Activated B cell treated with CpG ODN at 0.5 μM for 24 hours (primary cell): ENCODE measurements at regions of chrX and their contacts with region 1.

Region 1: GRCh38 chrX:43002526-43003203 is 224.7 kb upstream of the PPP1R2C start:
- DNase-seq: no peak
- ATAC-seq: peak; percentile 66
- H3K4me3 Mint-ChIP-seq: peak overlapping the region; percentile 24
- H3K27ac Mint-ChIP-seq: peak overlapping the region; percentile 59
- H3K4me1 Mint-ChIP-seq: peaks cover 19% of the 10 kb centered on the region
- H3K27me3 Mint-ChIP-seq: no peaks in the 10 kb centered on the region
- CTCF ChIP-seq: no peak

Region 2: DNA sequence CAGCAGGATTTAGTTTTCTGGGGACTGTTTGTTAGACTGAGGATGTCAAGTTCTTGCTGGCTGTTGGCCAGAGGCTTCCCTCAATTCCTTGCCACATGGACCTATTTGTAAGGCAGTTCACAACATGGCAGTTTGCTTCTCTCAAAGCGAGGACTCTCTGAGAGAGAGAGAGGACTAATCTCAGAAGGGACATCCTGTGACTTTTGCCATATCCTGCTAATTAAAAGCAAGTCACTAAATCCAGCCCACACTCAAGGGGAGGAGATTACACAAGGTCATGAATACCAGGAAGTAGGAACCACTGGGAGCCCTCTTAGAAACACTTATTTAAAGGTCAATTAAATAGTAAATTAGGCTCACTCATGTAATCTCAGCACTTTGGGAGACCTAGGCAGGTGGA is 262.9 kb before region 1 on chrX:
- CTCF ChIA-PET with region 1: no interaction called
- POLR2A ChIA-PET with region 1: no interaction called
- intact Hi-C with region 1: loop called (anchors 5 kb)
- DNase-seq: no peak
- ATAC-seq: no peak
- H3K4me3 Mint-ChIP-seq: peak overlapping the region; percentile 41
- H3K27ac Mint-ChIP-seq: peak overlapping the region; percentile 88
- H3K4me1 Mint-ChIP-seq: peaks cover 16% of the 10 kb centered on the region
- H3K27me3 Mint-ChIP-seq: no peaks in the 10 kb centered on the region
- CTCF ChIP-seq: no peak

Region 3: DNA sequence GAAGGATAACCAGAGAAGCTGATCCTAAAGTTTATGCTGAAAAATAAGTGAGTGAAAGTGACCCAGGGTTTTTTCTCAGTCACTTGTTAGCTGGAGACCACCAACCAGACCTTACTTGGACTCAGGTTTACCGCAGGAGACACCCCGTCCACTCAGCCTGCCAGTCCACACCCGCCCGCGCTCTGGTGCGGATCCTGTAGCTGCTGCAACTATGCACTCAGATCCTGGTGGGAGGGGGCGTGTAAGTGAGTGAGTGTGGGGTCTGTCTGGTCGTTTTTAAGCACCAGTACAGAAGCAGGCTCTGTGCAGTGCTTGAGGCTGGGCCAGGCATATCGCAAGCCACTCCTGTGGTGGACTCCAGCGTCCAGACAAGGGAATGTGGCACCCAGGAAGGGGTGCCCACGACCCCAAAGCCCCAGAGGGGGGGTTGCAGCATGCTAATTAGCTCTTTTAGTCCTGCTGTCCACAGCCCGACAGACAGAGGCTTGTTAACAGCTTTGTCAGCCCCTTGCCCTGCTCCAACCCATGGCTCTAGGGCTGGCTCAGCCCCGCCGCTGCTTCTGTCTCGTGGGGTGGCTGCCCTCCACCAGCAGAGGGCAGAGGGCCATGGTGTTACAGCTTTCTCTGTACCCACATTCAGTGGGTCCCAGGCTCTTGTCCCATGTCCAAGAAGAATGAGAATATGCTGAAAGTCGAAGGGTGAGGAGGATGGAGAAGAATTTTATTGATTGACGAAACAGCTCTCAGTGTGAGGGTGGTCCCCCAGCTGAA is 184.3 kb before region 1 on chrX:
- CTCF ChIA-PET with region 1: no interaction called
- POLR2A ChIA-PET with region 1: no interaction called
- intact Hi-C with region 1: no loop called
- DNase-seq: no peak
- ATAC-seq: no peak
- H3K4me3 Mint-ChIP-seq: no peak overlapping the region
- H3K27ac Mint-ChIP-seq: no peak overlapping the region
- H3K4me1 Mint-ChIP-seq: peaks cover under 1% of the 10 kb centered on the region
- H3K27me3 Mint-ChIP-seq: no peaks in the 10 kb centered on the region
- CTCF ChIP-seq: no peak

Region 4: GRCh38 chrX:42955349-42955748 is 47.3 kb before region 1 on chrX:
- CTCF ChIA-PET with region 1: no interaction called
- POLR2A ChIA-PET with region 1: no interaction called
- intact Hi-C with region 1: loop called (anchors 2 kb)
- DNase-seq: no peak
- ATAC-seq: peak; percentile 78
- H3K4me3 Mint-ChIP-seq: peak overlapping the region; percentile 29
- H3K27ac Mint-ChIP-seq: peak overlapping the region; percentile 82
- H3K4me1 Mint-ChIP-seq: peaks cover 48% of the 10 kb centered on the region
- H3K27me3 Mint-ChIP-seq: no peaks in the 10 kb centered on the region
- CTCF ChIP-seq: no peak